A549 (cell line): ENCODE measurements at regions of chr2 and their contacts with region 1.

Region 1: GRCh38 chr2:237512774-237513466 is 25.9 kb downstream of the MLPH start:
- DNase-seq: peak; percentile 72 to 90
- ATAC-seq: peak; percentile 83 to 86
- H3K4me3 ChIP-seq: no peak overlapping the region
- H3K27ac ChIP-seq: peak overlapping the region; percentile 97 to 98
- H3K4me1 ChIP-seq: peaks cover 58% of the 10 kb centered on the region
- CTCF ChIP-seq: peak; percentile 96
- EP300 ChIP-seq: no peak
- POLR2A ChIP-seq: no peak
- RAD21 ChIP-seq: peak; percentile 82 to 83

Region 2: DNA sequence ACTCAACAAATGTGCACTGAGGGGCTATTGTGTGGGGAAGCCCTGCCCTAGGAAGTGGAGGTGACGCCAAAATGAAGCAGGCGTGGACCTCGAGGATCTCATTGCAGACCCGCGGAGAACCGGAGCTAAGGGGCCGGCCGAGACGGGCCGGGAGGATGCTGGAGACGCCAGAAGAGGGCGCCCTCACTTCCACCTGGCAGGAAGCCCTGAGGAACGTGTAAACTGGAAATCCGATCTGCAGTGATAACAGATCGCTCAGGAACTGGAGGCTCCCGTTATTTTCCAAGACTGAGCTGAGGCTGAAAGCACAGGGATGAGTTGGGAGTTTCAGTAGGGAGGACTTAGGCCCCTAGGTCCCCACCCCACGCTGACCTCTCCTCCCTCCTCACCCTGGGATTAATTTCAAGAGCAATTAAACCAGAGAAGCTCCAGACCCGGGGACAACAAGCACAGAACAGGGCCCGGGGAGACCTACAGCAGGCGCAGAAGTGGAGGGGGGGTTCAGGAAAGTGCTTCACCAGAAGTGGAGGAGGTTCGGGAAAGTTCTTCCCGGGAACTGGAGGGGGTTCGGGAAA is 91.3 kb before region 1 on chr2:
- CTCF ChIA-PET with region 1: interaction called, 42 read pairs
- POLR2A ChIA-PET with region 1: no interaction called
- DNase-seq: peak; percentile 71 to 85
- ATAC-seq: peak; percentile 92 to 98
- H3K4me3 ChIP-seq: 0 out of 3 replicates have a peak overlapping the region, but pooled peaks have one; percentile 22
- H3K27ac ChIP-seq: peak overlapping the region; percentile 78 to 83
- H3K4me1 ChIP-seq: peaks cover 9% of the 10 kb centered on the region
- CTCF ChIP-seq: peak; percentile 85
- EP300 ChIP-seq: no peak
- POLR2A ChIP-seq: no peak
- RAD21 ChIP-seq: peak; percentile 73 to 75

Region 3: DNA sequence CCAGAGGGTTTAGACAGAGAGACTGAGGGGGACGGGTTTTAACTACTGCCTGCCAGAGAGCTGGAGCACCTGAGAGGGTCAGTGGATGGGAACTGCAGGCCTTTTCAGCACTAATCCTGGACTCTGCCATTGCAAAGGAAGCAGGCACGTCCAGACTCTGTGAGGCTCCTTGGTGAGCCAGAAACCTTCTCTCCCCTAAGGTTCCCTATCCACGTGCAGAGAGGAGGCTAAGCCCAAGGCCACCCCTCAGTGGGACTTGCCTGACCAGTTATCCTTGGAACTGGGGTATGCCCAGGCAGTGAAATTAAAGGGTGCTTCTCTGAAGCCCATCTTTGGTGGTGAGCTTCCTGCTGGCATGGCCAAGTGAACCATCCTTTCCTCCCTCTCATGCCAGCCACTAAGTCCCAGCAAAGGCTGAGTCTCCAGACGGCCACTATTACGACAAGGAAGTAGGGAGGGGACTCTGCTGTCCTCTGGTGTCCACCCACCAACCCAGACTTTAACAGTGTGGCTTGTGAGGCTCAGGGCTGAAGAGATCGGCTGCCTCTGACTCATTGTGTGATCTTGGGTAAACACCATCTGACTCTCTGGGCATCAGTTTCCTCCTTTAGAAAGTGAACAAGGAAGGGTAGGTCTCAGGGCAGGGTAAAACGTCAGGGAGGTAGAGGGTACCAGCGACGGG is 29.7 kb before region 1 on chr2:
- CTCF ChIA-PET with region 1: interaction called, 65 read pairs
- POLR2A ChIA-PET with region 1: interaction called, 9 read pairs
- DNase-seq: peak; percentile 58 to 90
- ATAC-seq: peak; percentile 57 to 61
- H3K4me3 ChIP-seq: 0 out of 3 replicates have a peak overlapping the region, but pooled peaks have one; percentile 6
- H3K27ac ChIP-seq: peak overlapping the region; percentile 98 to 99
- H3K4me1 ChIP-seq: peaks cover 42% of the 10 kb centered on the region
- CTCF ChIP-seq: no peak
- EP300 ChIP-seq: no peak
- POLR2A ChIP-seq: peak; percentile 52; the same call in 1 of the 2 replicates
- RAD21 ChIP-seq: peak; percentile 31 to 41; a peak in 2 of 5 replicates

Region 4: GRCh38 chr2:237524631-237525030 is 11.7 kb after region 1 on chr2:
- CTCF ChIA-PET with region 1: interaction called, 55 read pairs
- POLR2A ChIA-PET with region 1: interaction called, 5 read pairs
- DNase-seq: no peak
- ATAC-seq: peak in 1 of 2 experiments; percentile 11; a peak in 3 of 6 replicates
- H3K4me3 ChIP-seq: no peak overlapping the region
- H3K27ac ChIP-seq: peak overlapping the region in 1 of 2 experiments; percentile 56; a peak in 1 of 6 replicates
- H3K4me1 ChIP-seq: no peaks in the 10 kb centered on the region
- CTCF ChIP-seq: no peak
- EP300 ChIP-seq: no peak
- POLR2A ChIP-seq: no peak
- RAD21 ChIP-seq: no peak

Region 5: DNA sequence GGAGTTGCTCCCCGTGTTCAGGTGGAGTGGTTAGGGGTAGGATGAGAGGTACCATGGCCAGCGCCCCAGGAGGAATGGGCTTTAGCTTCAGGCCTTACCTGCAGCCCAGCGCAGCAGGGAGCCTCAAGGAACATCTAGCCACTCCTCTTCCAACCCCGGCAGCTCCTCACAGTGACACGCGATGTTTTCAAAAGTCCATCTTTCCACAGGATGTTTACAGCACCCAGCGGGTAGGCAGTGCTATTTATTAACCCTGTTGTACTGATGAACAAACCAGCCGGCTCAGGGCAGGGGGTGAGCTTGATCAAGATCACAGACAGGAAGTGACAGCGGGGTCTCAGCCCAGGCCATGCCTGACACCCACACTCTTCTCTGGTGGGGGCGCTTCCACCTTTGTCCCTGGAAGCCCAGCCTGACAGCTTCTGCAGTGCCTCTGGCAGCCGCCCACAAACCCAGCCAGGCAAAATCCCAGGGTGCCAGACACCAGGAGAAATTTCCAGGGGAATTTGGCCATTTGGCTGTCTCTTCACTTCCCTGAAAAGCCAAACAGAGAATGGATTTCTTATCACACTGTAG is 35.0 kb after region 1 on chr2:
- CTCF ChIA-PET with region 1: interaction called, 13 read pairs
- POLR2A ChIA-PET with region 1: no interaction called
- DNase-seq: no peak
- ATAC-seq: 0 out of 6 replicates have a peak, but pooled peaks of 1 of the 2 experiments have one; percentile 10
- H3K4me3 ChIP-seq: no peak overlapping the region
- H3K27ac ChIP-seq: no peak overlapping the region
- H3K4me1 ChIP-seq: no peaks in the 10 kb centered on the region
- CTCF ChIP-seq: no peak
- EP300 ChIP-seq: no peak
- POLR2A ChIP-seq: no peak
- RAD21 ChIP-seq: no peak